ENCODE measurements at regions of chr17 and their contacts with region 1.

Region 1: DNA sequence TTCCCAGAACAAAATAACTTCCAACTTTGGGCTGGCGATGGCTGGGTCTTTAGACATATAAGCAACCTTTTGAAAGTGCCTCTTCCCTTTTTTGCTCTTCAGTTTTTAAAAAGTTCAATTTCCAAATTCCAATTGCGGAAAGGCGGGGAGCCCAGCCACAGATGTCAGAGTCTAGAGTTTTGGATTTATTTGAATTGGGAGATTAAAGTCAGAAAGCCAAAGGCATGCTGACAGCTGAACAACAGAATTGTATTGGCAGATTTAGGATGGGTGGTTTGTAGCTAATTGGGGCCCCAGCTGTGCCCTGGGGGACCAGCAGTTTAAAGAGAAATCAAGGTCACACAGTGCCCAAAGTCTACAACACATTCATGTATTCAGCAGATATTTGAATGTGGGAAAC is 10.5 kb downstream of the YPEL2 start:
- DNase-seq: no peak

Region 2: GRCh38 chr17:58513965-58514774 is 827.8 kb before region 1 on chr17 and contains the start of gene MTMR4:
- intact Hi-C with region 1: no loop called
- DNase-seq: peak; percentile 92
- total RNA-seq, gene MTMR4: 27.4 to 28.5 TPM

Region 3: GRCh38 chr17:59266751-59267150 is 75.2 kb before region 1 on chr17:
- intact Hi-C with region 1: loop called in 1 of 2 experiments (anchors 2 kb)
- DNase-seq: no peak

Region 4: GRCh38 chr17:59287452-59287851 is 54.5 kb before region 1 on chr17:
- intact Hi-C with region 1: no loop called
- DNase-seq: no peak